Common myeloid progenitor, CD34-positive (primary cell): ENCODE measurements at regions of chr4 and their contacts with region 1.

Region 1: DNA sequence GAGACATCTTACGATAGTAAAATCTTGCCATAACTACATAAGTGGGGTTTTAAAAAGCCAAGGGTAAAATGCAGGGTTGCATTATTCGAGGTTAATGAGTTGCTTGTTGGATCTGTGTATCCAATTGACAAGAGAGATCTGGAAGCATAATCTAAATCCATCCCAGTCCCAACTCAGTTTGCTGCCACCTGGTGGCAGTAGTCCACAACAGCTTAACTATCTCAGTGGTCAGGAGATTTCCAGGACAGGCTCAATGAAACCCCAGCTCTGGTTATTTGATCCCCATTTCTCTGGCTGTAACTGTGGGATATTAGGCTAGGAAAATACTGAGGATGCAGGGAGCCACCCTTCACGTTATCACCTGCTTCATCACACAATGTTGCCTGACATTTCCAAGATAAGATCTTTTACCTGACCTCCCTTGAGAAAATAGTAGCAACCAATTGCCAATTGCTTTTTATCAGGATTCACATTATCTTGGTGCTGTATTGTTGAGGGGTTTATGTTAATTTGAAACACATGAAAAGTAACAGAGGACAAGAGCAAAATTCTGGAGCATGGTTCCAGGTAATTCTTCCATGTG is 88.2 kb upstream of the TNIP3 start:
- DNase-seq: peak; percentile 44 to 68 (median 58)
- H3K4me3 ChIP-seq: no peak overlapping the region
- H3K27ac ChIP-seq: no peak overlapping the region
- H3K4me1 ChIP-seq: peaks cover 0 to 10% (median 3%) of the 10 kb centered on the region in 4 experiments
- H3K27me3 ChIP-seq: no peaks in the 10 kb centered on the region

Region 2: GRCh38 chr4:121192480-121192879 is 59.8 kb before region 1 on chr4:
- CTCF ChIA-PET with region 1: interaction called, 11 read pairs
- POLR2A ChIA-PET with region 1: no interaction called
- DNase-seq: peak; percentile 24 to 46 (median 34)
- H3K4me3 ChIP-seq: no peak overlapping the region
- H3K27ac ChIP-seq: no peak overlapping the region
- H3K4me1 ChIP-seq: peaks cover 0 to 12% (median 8%) of the 10 kb centered on the region in 4 experiments
- H3K27me3 ChIP-seq: no peaks in the 10 kb centered on the region